ENCODE measurements at regions of chr13 and their contacts with region 1.

Region 1: GRCh38 chr13:49443704-49444523 is at the starts of genes CAB39L and SETDB2:
- DNase-seq: peak; percentile 100
- H3K4me3 Mint-ChIP-seq: peak within 1 kb of the TSS; percentile 95
- H3K27ac Mint-ChIP-seq: peak within 1 kb of the TSS; percentile 98
- H3K4me1 Mint-ChIP-seq: peaks cover 44% of the 10 kb centered on the region
- H3K27me3 Mint-ChIP-seq: peaks cover 2% of the 10 kb centered on the region
- total RNA-seq, gene CAB39L: 5.7 and 6.8 TPM in 2 replicates
- total RNA-seq, gene SETDB2: 13.4 and 14.5 TPM in 2 replicates

Region 2: DNA sequence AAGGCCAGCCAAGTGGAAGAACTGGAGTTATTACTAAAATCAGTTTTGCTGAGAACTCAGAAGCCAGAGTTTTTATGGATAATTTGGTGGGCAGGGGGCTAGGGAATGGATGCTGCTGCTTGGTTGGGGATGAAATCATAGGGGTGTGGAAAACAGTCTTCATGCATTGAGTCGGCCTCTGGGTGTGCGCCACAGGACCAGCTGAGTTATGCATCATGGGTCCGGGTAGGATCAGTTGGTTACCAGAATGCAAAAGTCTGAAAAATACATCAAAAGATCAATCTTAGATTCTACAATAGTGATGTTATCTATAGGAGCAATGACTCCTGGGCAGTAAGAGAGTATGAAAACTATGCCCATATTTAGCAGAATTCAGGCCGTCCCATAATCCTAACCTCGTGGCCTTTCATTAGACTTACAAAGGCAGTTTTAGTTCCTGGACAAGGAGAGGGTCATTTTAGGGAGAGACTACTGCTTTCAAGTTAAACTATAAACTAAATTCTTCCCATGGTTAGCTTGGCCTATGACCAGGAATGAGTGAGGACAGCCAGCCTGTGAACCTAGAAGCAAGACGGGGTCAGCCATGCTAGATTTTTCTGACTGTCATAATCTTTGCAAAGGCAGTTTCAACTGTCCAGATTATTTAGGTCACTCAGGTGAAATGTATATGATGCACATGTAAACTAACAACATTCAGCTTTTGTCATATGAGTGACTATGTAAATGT is 208.0 kb before region 1 on chr13:
- intact Hi-C with region 1: no loop called
- DNase-seq: no peak
- H3K4me3 Mint-ChIP-seq: no peak overlapping the region
- H3K27ac Mint-ChIP-seq: no peak overlapping the region
- H3K4me1 Mint-ChIP-seq: peaks cover 4% of the 10 kb centered on the region
- H3K27me3 Mint-ChIP-seq: peaks cover 23% of the 10 kb centered on the region

Region 3: GRCh38 chr13:49247643-49248621 is 196.0 kb before region 1 on chr13 and contains the start of gene CDADC1:
- intact Hi-C with region 1: loop called (anchors 5 kb)
- DNase-seq: peak; percentile 98
- H3K4me3 Mint-ChIP-seq: peak within 1 kb of the TSS; percentile 91
- H3K27ac Mint-ChIP-seq: peak within 1 kb of the TSS; percentile 96
- H3K4me1 Mint-ChIP-seq: peaks cover 23% of the 10 kb centered on the region
- H3K27me3 Mint-ChIP-seq: peaks cover 18% of the 10 kb centered on the region
- total RNA-seq, gene CDADC1: 8.0 and 9.5 TPM in 2 replicates

Region 4: GRCh38 chr13:49421391-49421790 is 22.5 kb before region 1 on chr13:
- intact Hi-C with region 1: no loop called
- DNase-seq: peak; percentile 74
- H3K4me3 Mint-ChIP-seq: no peak overlapping the region
- H3K27ac Mint-ChIP-seq: no peak overlapping the region
- H3K4me1 Mint-ChIP-seq: no peaks in the 10 kb centered on the region
- H3K27me3 Mint-ChIP-seq: no peaks in the 10 kb centered on the region

Region 5: DNA sequence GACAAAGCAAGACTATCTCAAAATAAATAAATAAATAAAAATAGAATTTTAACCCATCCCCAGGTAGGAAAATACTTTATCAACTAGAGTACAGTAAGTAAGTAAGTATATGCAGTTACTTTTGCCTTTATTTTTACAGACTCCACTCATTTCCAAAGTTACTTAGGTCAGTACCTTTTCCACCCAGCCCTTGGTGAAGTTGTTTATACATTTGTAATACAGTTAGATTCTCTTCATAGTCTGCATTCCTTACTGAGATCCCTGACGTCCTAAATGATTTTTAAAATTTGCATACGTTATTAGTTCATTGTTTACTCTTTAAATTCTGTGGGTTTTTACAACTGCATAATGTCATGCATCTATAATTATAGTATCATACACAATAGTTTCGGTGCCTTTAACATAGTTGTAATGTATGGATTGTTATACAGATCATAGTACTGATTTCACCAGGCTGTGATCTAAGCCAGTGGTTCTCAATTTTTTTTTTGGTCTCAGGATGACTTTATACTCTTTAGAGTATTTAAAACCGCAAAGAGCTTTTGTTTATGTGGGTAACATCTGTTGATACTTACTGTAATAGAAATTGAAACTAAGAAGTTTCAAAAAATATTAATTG is 10.6 kb after region 1 on chr13:
- intact Hi-C with region 1: loop called (anchors 1 kb)
- DNase-seq: no peak
- H3K4me3 Mint-ChIP-seq: peak overlapping the region; percentile 43
- H3K27ac Mint-ChIP-seq: peak overlapping the region; percentile 52
- H3K4me1 Mint-ChIP-seq: peaks cover 24% of the 10 kb centered on the region
- H3K27me3 Mint-ChIP-seq: no peaks in the 10 kb centered on the region

Region 6: GRCh38 chr13:49464621-49465325 is 20.9 kb after region 1 on chr13:
- intact Hi-C with region 1: no loop called
- DNase-seq: no peak
- H3K4me3 Mint-ChIP-seq: no peak overlapping the region
- H3K27ac Mint-ChIP-seq: no peak overlapping the region
- H3K4me1 Mint-ChIP-seq: no peaks in the 10 kb centered on the region
- H3K27me3 Mint-ChIP-seq: no peaks in the 10 kb centered on the region

Region 7: DNA sequence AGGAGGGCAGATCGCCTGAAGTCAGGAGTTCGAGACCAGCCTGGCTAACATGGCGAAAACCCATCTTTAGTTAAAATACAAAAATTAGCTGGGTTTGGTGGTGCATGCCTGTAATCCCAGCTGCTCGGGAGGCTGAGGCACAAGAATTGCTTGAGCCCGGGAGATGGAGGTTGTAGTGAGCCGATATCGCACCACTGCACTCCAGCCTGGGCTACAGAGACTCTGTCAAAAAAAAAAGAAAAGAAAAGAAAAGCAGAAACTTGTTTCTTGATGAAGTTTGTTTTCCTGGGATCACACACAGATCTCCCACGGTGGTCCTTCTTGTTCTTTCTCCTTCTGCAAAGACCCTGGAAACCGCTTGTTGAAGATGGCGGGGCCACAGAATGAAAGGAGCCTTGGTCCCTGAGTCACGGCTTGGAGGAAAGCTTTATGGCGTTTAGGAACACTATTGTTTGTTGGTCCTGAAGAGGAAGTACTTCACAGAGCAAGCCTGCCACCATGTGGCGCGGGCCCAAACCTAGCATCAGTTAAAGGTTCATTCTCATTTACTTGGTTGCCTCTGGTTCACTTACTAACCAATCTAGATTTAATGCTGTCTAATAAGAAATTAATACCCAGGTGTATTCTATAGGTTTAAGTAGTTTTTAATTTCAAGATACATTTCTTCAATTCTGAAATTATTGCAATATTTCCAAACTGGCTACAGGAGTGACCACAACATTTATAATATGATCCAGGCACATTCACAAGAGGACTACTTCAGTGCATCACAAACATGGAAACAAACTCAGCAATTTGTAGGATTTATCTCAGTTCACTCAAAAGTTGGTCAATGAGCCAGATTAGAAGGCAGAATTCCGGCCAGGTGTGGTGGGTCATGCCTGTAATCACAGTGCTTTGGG is 163.1 kb after region 1 on chr13:
- intact Hi-C with region 1: loop called (anchors 5 kb)
- DNase-seq: peak; percentile 93
- H3K4me3 Mint-ChIP-seq: peak overlapping the region; percentile 77
- H3K27ac Mint-ChIP-seq: peak overlapping the region; percentile 64
- H3K4me1 Mint-ChIP-seq: peaks cover 2% of the 10 kb centered on the region
- H3K27me3 Mint-ChIP-seq: peaks cover 3% of the 10 kb centered on the region